Posterior vena cava (tissue), 2 donors: ENCODE measurements at regions of chr4 and their contacts with region 1.

Region 1: GRCh38 chr4:130703211-130703920 is 1607.4 kb downstream of the C4orf33 start:
- DNase-seq: no peak

Region 2: DNA sequence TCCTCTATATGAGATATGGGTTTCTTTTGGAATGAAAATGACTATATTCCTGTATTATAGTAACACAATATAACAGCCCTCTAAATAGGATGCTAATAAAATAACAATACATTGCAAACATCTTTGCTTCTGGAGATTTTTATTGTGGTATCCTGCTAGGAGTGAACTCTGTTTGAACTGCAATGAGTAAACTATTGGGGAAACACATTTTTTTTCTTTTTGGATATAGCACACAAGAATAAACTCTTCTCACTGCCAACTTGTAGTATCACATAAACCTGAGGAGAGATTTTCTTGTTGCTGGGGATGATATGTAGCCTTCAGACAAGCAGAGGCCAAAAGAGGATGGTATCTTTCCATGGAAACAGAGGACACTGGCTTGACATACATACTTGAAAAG is 1369.2 kb before region 1 on chr4:
- intact Hi-C with region 1: loop called in 1 of 2 experiments (anchors 5 kb)
- DNase-seq: no peak

Region 3: DNA sequence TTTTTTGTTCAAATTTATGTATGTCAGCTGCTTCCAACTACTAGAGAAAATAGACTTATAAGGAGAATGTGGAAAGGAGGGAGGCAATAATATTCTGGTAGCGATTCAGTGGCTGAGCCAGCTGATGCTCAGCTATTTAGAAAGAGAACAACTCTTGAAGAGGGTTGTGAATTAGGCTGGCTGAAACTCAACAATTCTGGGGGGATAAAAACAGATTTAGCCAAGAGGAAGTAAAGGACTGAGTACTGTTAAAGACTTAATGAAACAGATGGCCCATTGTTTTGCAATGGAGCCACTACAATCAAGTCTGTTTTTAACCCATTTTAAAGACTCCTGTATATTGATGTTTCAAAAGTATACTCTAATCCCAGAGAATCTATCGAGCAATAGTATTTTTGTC is 548.5 kb before region 1 on chr4:
- intact Hi-C with region 1: no loop called
- DNase-seq: no peak

Region 4: DNA sequence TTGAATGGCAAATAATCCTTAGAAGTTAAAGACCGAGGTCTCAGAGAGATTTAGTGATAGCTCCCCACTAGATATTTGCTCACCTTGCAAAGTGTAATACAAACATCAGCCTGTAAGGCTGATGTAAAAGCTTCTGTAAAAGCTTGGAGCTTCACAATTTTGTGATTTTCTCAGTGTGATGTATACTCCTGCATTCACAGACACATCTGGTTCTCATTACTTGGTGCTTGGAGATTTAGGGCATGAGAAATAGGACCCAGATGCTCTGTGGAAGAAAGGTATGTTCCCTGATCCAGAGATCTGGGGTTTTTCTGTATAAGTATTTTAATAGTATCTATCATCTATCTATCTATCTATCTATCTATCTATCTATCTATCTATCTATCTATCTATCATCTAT is 56.9 kb after region 1 on chr4:
- intact Hi-C with region 1: no loop called
- DNase-seq: no peak

Region 5: DNA sequence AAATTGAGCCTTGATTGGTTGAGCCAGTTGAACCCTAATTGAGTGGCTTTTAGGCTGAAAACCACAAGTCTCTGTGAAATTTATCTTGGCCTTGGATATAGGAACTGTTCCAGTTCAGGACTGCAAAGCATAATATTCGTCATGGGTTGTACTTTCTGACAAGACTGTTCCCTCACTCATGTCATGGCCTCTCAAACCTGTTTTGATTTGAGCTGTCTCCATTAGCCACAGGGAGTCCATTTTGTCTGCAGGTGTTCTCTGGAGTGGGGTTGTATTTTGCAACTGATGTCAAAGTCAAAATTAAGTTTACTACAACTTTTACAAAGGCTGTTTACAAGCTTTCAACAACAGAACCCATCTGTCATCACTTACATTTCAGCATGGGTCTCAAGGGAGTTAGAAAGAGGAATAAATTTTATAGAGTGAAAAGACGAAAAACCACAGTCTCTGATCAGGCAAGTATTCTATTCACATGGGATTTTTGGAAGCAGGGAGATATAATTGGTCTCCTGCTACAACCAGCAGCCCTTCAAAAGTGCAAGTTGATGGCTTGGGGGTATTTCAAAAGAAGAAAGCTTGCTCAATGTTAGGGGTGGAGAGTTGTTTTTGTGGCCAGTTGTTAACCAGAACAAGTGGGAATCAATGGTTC is 108.9 kb after region 1 on chr4:
- intact Hi-C with region 1: no loop called
- DNase-seq: no peak